ENCODE measurements at regions of chr6 and their contacts with region 1.

Region 1: DNA sequence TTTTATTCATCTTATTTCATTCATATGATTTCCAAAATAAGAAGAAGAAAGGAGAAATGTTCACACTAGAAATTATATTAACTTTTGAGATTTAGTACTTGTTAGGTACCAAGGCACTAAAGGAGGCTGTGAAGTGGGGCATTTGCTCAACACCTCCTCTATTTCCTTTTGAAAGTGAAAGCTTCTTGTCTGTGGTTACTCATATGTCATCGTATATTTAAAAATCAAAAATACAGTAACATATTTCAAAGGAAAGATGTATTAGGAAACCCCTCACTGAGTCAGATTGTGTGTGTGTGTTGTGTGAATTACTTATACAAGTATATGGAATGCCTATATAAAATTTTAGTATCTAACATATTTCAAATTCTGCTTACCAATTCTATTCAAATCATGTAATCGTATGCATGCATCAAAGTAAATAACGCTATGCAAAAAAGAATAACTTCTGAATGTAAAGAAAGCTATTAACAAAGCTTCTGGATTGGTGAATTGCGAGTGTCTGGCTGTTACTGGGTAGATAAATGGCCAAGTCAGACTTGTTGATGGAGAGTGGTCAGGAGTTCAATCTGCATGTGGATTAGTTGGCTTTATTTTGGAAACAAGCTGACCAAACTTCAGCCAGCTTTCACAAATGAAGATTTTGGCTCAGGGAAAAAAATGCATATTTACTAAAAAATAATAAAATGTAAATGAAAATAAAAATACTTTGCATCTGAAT is 70.9 kb downstream of the PACRG start:
- DNase-seq: no peak

Region 2: GRCh38 chr6:160853946-160854345 is 1944.8 kb before region 1 on chr6:
- intact Hi-C with region 1: loop called in 1 of 2 experiments (anchors 5 kb)
- DNase-seq: no peak

Measured in posterior vena cava (tissue), 2 donors.